ENCODE measurements at regions of chr7 and their contacts with region 1.

Region 1: GRCh38 chr7:128155100-128155740 is 85.9 kb upstream of the LEP start:
- DNase-seq: no peak
- H3K4me3 ChIP-seq: no peak overlapping the region
- H3K27ac ChIP-seq: no peak overlapping the region
- H3K4me1 ChIP-seq: peaks cover 8 to 11% (median 9%) of the 10 kb centered on the region in 4 experiments
- H3K27me3 ChIP-seq: peaks cover 0 to 2% (median 0%) of the 10 kb centered on the region in 4 experiments; a peak in 3 of 7 replicates
- CTCF ChIP-seq: no peak
- EP300 ChIP-seq: no peak
- POLR2A ChIP-seq: no peak
- RAD21 ChIP-seq: no peak

Region 2: DNA sequence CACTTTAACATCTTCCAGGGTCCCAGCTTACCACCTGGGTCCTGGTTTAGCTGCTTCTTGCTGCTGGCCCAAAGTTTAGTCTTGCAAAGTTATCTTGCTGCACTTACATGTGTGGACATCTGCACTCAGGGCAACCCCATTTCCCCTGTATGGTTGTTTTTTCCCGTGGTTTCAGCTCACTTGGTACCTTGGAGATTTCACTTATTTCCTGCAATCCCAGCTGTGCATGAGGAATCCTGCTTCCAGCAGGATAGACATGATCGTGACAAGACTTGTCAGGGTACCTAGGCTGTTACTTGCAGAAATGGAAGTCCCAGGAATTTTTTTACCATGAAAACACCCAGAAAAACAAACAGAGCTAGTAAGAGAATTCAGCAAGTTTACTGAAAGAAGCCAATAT is 10.0 kb before region 1 on chr7:
- CTCF ChIA-PET with region 1: interaction called, 12 read pairs
- POLR2A ChIA-PET with region 1: no interaction called
- DNase-seq: peak in 1 of 2 experiments; percentile 20
- H3K4me3 ChIP-seq: no peak overlapping the region
- H3K27ac ChIP-seq: no peak overlapping the region
- H3K4me1 ChIP-seq: no peaks in the 10 kb centered on the region
- H3K27me3 ChIP-seq: no peaks in the 10 kb centered on the region; a peak in 1 of 7 replicates
- CTCF ChIP-seq: no peak
- EP300 ChIP-seq: no peak
- POLR2A ChIP-seq: no peak
- RAD21 ChIP-seq: no peak